Endothelial cell of umbilical vein (primary cell): ENCODE measurements at regions of chr3 and their contacts with region 1.

Region 1: DNA sequence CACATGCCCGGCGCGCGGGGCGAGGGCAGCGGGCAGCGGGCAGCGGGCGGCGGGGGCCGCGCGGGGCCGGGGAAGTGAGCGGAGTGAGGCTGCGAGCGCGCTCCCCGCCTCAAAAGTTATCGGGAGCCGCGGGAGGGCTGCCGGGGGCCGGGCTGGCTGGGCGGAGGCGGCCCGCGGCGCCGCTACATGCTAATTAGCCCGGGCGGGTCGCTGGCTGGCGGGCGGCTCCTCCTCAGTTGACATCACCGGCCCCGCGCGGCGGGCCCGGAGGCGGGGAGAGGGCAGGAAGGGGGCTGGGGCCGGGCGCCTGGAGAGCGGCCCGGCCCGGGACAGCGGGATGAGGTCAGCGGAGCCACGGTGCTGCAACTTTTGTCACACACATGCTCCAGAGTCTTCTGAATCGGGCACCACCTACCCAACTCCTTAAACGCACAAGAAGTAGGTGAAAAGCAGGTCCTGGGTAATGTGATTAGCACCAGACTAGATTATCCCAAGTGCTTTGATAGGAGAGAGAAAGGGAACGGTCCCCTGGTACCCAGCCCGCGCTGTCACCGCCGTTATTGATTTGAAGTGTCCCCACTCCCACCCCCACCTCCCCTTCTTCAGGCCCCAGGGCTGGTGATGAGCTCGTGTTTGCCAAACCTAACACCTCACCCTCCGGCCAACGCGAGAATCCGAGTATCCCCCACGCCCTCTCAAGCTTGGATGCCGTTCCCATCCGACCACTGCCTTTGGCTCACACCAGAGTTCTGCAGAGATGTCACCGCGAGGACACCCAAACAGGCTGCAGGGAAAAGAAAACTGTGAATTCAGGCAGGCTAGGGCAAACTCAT is at the start of gene HEG1:
- DNase-seq: peak; percentile 80
- H3K4me3 ChIP-seq: peak within 1 kb of the TSS; percentile 73 to 85 (median 82)
- H3K27ac ChIP-seq: peak within 1 kb of the TSS; percentile 84
- H3K4me1 ChIP-seq: peaks cover 50% of the 10 kb centered on the region
- H3K27me3 ChIP-seq: no peaks in the 10 kb centered on the region
- CTCF ChIP-seq: no peak
- POLR2A ChIP-seq: peak; percentile 42
- total RNA-seq, gene HEG1: 87.0 and 106 TPM in 2 replicates

Region 2: GRCh38 chr3:124928333-124929202 is 127.6 kb before region 1 on chr3:
- CTCF ChIA-PET with region 1: interaction called, 5 read pairs
- POLR2A ChIA-PET with region 1: no interaction called
- dilution Hi-C with region 1: no loop called
- intact Hi-C with region 1: loop called (anchors 5 kb)
- DNase-seq: peak; percentile 74
- H3K4me3 ChIP-seq: no peak overlapping the region
- H3K27ac ChIP-seq: no peak overlapping the region
- H3K4me1 ChIP-seq: no peaks in the 10 kb centered on the region
- H3K27me3 ChIP-seq: peaks cover 0 to 3% of the 10 kb centered on the region in 2 experiments
- CTCF ChIP-seq: peak; percentile 69 to 74
- POLR2A ChIP-seq: no peak

Region 3: GRCh38 chr3:124995460-124995994 is 60.6 kb before region 1 on chr3:
- CTCF ChIA-PET with region 1: interaction called, 7 read pairs
- POLR2A ChIA-PET with region 1: no interaction called
- dilution Hi-C with region 1: no loop called
- intact Hi-C with region 1: loop called (anchors 1 kb)
- DNase-seq: peak; percentile 67
- H3K4me3 ChIP-seq: no peak overlapping the region
- H3K27ac ChIP-seq: no peak overlapping the region
- H3K4me1 ChIP-seq: peaks cover 7% of the 10 kb centered on the region
- H3K27me3 ChIP-seq: no peaks in the 10 kb centered on the region
- CTCF ChIP-seq: peak; percentile 56 to 65
- POLR2A ChIP-seq: no peak

Region 4: GRCh38 chr3:125024817-125025216 is 31.3 kb before region 1 on chr3:
- CTCF ChIA-PET with region 1: interaction called, 14 read pairs
- POLR2A ChIA-PET with region 1: interaction called, 5 read pairs
- dilution Hi-C with region 1: no loop called
- intact Hi-C with region 1: loop called (anchors 1 kb)
- DNase-seq: peak; percentile 74
- H3K4me3 ChIP-seq: no peak overlapping the region
- H3K27ac ChIP-seq: peak overlapping the region; percentile 4
- H3K4me1 ChIP-seq: peaks cover 37% of the 10 kb centered on the region
- H3K27me3 ChIP-seq: no peaks in the 10 kb centered on the region
- CTCF ChIP-seq: no peak
- POLR2A ChIP-seq: no peak

Region 5: DNA sequence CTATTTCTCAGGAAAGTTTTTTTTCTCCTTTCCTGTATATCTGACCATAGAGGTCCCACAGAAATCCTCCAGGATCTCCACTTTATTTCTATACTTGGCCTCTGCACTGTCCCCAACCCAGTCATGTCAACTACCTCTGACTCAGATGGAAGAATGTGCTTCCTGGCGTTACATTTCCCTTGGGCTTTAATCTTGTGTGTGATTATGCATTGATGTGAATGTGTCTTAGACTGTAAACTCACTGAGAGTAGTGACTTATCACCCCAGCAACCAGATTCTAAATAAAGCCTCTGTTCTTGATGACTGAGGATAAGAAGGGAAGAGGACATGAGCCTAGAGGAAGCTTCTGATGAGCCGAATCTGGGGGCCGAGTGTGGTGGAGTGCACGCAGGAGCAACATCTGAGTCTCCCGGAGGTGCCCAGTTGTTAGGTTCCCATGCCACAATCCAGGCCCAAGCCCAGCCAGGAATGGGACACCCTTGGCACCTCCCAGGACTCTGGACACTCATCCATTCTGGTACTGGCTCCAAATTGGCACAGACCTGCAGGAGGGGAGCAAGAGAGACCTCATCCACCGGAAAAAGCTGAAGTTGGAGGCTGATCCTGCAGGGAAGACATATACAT is 31.8 kb after region 1 on chr3:
- CTCF ChIA-PET with region 1: no interaction called
- POLR2A ChIA-PET with region 1: no interaction called
- dilution Hi-C with region 1: no loop called
- intact Hi-C with region 1: no loop called
- DNase-seq: no peak
- H3K4me3 ChIP-seq: no peak overlapping the region
- H3K27ac ChIP-seq: no peak overlapping the region
- H3K4me1 ChIP-seq: no peaks in the 10 kb centered on the region
- H3K27me3 ChIP-seq: no peaks in the 10 kb centered on the region
- CTCF ChIP-seq: no peak
- POLR2A ChIP-seq: no peak

Region 6: GRCh38 chr3:125374996-125375941 is 319.1 kb after region 1 on chr3 and contains the start of gene ZNF148:
- CTCF ChIA-PET with region 1: no interaction called
- POLR2A ChIA-PET with region 1: no interaction called
- dilution Hi-C with region 1: no loop called
- intact Hi-C with region 1: loop called (anchors 2 kb)
- DNase-seq: peak; percentile 92
- H3K4me3 ChIP-seq: peak within 1 kb of the TSS; percentile 90 to 100 (median 95)
- H3K27ac ChIP-seq: peak within 1 kb of the TSS; percentile 57
- H3K4me1 ChIP-seq: peaks cover 15% of the 10 kb centered on the region
- H3K27me3 ChIP-seq: no peaks in the 10 kb centered on the region
- CTCF ChIP-seq: peak in 1 of 2 donors; percentile 3
- POLR2A ChIP-seq: peak; percentile 91
- total RNA-seq, gene ZNF148: 38.2 and 41.3 TPM in 2 replicates